ENCODE measurements at regions of chr3 and their contacts with region 1.

Region 1: DNA sequence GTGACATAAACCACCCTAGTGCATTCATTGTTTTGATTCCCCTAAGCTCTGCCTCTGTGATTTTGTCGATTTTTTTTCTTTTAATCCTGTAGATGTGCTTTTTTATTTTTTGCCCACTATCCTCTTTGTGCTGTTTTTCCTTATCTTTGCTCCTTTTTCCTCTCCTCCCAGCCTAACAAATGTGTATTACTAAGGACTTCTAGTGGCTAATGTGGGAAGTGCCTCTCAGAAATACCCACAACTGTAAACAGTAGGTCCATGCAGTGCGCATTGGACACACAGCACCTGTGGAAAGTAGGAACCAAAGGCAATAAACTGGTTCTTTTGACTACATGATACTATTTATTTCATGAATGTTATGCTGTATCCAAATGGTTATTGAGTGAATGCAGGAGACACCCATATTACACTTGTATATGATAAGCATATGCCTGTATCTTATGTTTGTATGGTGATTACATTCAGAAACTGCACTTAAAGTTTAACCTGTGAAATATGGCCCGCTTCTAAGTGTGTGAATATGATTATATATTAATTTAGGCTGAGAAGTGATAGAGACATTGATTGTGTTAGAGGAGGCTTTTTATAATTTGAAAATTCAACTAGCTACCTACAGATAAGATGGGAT is 147.8 kb downstream of the PLCL2 start:
- DNase-seq: no peak

Region 2: GRCh38 chr3:16600780-16601539 is 431.6 kb before region 1 on chr3:
- intact Hi-C with region 1: loop called (anchors 1 kb)
- DNase-seq: peak; percentile 35 to 94 (median 80)

Region 3: DNA sequence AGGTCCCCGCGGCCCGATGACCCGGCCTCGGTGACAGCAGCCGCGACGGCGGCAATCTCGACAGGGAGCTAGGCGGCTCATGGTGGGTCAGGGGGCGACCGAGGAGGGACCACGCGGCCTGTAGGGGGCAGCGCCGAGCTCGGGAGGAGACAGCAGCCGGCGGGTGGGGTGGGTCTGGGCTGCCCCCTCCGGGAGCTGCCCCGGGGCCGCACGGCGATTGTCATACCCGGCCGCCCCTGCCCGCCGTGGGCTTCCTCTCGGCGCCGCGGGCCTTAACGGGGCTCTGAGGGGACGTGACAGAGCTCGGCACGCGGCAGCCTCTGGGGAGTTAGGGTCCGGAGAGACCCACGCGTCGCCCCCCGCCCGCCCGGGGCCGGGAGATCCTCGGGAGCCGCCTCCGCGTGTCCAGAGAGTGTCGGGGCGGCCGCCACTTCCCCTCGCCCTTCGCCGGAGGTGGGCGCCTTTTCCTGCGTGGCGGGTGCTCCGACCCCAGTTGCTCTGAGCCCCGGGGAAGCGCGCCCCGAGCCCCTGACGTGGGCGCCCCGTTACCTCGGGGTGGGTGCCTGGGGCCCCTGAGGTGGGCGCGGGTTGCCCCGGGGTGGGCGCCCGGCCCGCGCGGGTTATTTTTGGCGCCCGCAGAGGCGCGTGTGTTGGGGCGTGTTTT is 148.3 kb before region 1 on chr3:
- intact Hi-C with region 1: loop called (anchors 10 kb)
- DNase-seq: peak; percentile 26 to 91 (median 47)

Region 4: DNA sequence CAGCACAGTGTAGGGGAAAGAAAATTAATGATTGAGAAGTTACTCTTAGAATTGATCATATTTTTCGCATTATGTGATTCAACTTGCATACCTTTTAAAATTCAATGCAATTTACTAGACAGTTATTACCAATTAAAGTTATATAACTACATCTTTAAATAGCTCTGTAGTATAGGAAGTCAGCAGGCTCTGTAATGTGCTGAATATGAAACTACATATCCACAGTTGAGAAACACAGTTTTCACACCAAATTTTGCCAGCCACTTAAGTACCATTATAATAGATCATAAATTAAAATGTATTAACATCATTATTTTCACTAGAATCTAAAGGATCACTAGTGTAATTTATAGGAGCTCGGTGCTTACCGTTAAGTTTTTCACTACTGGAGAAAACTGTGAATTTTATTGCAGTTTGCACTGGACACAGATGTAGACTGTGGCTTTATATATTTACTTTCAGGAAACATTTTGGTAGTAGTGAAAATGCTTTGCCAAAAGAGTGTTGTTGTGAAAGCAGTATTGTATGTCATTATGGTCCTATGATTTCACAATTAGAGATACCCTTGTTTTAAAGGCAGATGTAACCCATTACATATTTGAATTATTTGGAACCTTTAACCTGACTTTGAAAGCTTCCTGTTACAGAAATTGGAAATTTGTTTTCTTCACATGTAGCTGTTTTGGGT is 34.1 kb before region 1 on chr3:
- intact Hi-C with region 1: no loop called
- DNase-seq: no peak

Region 5: GRCh38 chr3:17055374-17056276 is 23.1 kb after region 1 on chr3:
- intact Hi-C with region 1: no loop called
- DNase-seq: no peak

Region 6: DNA sequence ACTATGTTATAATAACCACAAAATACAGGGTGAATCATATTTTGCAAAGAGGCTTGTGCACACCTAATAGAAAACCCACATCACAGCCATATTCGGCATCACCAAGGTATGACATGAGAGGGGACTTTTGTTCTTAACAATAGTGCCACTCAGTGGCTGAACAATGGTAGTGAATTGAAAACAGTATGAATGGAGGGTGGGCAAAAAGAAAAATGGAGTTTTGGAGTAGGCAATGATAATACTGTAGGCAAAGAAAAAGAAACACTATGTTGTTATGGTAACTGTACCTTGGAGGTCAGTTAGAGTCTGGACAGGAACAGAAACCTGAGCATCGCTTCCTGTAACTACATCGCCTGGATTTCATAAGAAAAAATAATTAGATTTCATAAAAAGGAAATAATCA is 200.9 kb after region 1 on chr3:
- intact Hi-C with region 1: loop called (anchors 10 kb)
- DNase-seq: peak in 1 of 10 donors; percentile 15